ENCODE measurements at regions of chr5 and their contacts with region 1.

Region 1: GRCh38 chr5:176543428-176544173 is 5.5 kb upstream of the CDHR2 start:
- DNase-seq: peak; percentile 61
- H3K4me3 ChIP-seq: peak overlapping the region; percentile 44 to 50 (median 46)
- H3K27ac ChIP-seq: peak overlapping the region; percentile 71
- H3K4me1 ChIP-seq: peaks cover 48% of the 10 kb centered on the region
- H3K27me3 ChIP-seq: no peaks in the 10 kb centered on the region
- CTCF ChIP-seq: no peak

Region 2: GRCh38 chr5:175895215-175896102 is 648.1 kb before region 1 on chr5:
- CTCF ChIA-PET with region 1: no interaction called
- dilution Hi-C with region 1: no loop called
- in situ Hi-C with region 1: no loop called
- intact Hi-C with region 1: no loop called
- DNase-seq: peak; percentile 83
- H3K4me3 ChIP-seq: no peak overlapping the region
- H3K27ac ChIP-seq: no peak overlapping the region
- H3K4me1 ChIP-seq: peaks cover 9% of the 10 kb centered on the region
- H3K27me3 ChIP-seq: no peaks in the 10 kb centered on the region
- CTCF ChIP-seq: no peak

Region 3: DNA sequence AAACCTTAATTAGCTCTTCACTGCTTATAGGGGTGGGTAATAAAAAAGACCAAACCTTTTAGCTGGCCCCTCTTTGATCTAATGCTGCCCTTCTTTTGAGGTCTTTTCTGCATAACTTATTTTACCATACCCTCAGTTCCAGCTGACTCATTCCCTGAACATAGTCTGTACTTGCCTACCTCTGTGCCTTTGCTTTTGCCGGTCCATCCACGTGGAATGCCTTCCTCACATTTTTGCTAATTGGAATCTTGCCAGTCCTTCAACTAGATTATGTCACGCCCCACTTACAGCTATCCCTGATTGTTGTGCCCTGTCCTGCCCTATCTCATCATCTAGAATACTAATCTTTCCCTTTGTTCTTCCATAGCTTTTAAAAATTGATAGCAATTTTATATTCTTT is 51.2 kb before region 1 on chr5:
- CTCF ChIA-PET with region 1: interaction called, 11 read pairs
- dilution Hi-C with region 1: no loop called
- in situ Hi-C with region 1: no loop called
- intact Hi-C with region 1: no loop called
- DNase-seq: peak; percentile 88
- H3K4me3 ChIP-seq: no peak overlapping the region
- H3K27ac ChIP-seq: peak overlapping the region; percentile 18
- H3K4me1 ChIP-seq: peaks cover 26% of the 10 kb centered on the region
- H3K27me3 ChIP-seq: no peaks in the 10 kb centered on the region
- CTCF ChIP-seq: no peak